ENCODE measurements at regions of chr15 and their contacts with region 1.

Region 1: GRCh38 chr15:56759450-56759845 is 26.1 kb upstream of the ZNF280D start:
- DNase-seq: peak; percentile 91
- H3K4me3 ChIP-seq: peak overlapping the region in 2 of 3 experiments; percentile 6 to 17
- H3K27ac ChIP-seq: peak overlapping the region; percentile 44
- H3K4me1 ChIP-seq: peaks cover 30% of the 10 kb centered on the region
- H3K27me3 ChIP-seq: no peaks in the 10 kb centered on the region
- CTCF ChIP-seq: no peak

Region 2: DNA sequence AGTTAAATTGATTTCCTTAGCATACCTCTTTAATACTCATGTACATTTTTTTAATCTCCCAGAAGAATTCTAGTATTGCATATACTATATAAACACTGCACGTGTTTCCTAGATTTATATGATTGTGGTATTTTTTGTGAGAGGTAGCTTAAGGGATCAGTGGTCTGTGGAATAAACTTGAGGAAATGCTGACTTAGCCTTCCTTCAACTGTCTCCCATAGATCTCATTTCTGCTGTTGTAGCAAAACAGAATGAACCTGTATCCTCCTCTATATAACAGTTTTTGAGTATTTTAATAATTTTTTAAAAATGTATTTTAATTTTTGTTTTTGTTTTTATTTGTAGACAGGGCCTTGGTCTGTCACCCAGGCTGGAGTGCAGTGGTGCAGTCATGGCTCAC is 245.8 kb after region 1 on chr15:
- CTCF ChIA-PET with region 1: no interaction called
- dilution Hi-C with region 1: no loop called
- in situ Hi-C with region 1: no loop called
- intact Hi-C with region 1: loop called (anchors 5 kb)
- DNase-seq: no peak
- H3K4me3 ChIP-seq: no peak overlapping the region
- H3K27ac ChIP-seq: no peak overlapping the region
- H3K4me1 ChIP-seq: no peaks in the 10 kb centered on the region
- H3K27me3 ChIP-seq: no peaks in the 10 kb centered on the region
- CTCF ChIP-seq: no peak

Measured in mammary epithelial cell (primary cell).